ENCODE measurements at regions of chr3 and their contacts with region 1.

Region 1: GRCh38 chr3:185983495-185984141 is 45.8 kb upstream of the TRA2B start:
- DNase-seq: peak; percentile 61
- H3K4me3 ChIP-seq: no peak overlapping the region
- H3K27ac ChIP-seq: no peak overlapping the region
- H3K4me1 ChIP-seq: no peaks in the 10 kb centered on the region
- H3K27me3 ChIP-seq: no peaks in the 10 kb centered on the region
- CTCF ChIP-seq: peak; percentile 90 to 95

Region 2: DNA sequence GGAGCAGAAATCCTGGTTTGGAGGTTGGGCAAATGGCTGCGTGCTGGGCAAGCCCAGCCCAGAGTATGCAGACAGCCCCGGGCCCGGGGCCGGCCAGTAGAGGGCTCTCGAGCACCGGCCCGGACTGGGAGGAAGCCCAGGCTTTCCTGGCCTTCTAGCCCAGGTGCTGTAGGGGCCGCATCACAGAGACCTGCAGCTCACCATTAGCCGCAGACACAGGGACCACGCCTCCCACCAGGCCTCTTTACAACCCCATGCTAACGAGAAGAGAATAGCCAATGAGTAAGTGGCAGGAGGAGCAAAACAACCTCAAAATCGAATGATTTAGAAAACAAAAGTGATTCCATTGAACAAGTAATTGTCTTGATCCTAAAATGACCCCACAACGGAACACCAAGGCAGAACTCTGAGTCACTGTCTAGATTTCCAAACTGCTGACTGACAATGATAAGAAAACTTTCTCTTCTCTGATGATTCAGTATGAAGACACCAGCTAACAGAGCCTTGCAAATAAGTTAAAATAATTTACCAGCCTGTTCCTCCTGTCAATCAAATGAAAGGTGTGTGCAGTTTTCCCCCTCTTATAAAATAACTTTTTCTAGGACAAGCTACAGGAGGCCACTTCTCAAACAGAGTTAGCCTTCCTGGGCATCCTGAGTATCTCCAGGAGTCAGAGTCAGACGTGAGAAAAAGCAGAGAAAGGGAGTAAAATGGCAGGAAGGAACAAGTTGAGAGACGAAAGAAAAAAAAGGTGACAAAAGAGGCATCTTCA is 276.2 kb after region 1 on chr3:
- CTCF ChIA-PET with region 1: no interaction called
- dilution Hi-C with region 1: no loop called
- in situ Hi-C with region 1: loop called in 1 of 2 experiments (anchors 5 kb)
- intact Hi-C with region 1: loop called (anchors 5 kb)
- DNase-seq: peak; percentile 84
- H3K4me3 ChIP-seq: peak overlapping the region in 2 of 3 experiments; percentile 2 to 27
- H3K27ac ChIP-seq: no peak overlapping the region
- H3K4me1 ChIP-seq: peaks cover 25% of the 10 kb centered on the region
- H3K27me3 ChIP-seq: no peaks in the 10 kb centered on the region
- CTCF ChIP-seq: peak; percentile 67 to 96

Region 3: GRCh38 chr3:186320862-186321568 is 337.4 kb after region 1 on chr3:
- CTCF ChIA-PET with region 1: interaction called, 10 read pairs
- dilution Hi-C with region 1: no loop called
- in situ Hi-C with region 1: no loop called
- intact Hi-C with region 1: no loop called
- DNase-seq: peak; percentile 93
- H3K4me3 ChIP-seq: no peak overlapping the region
- H3K27ac ChIP-seq: peak overlapping the region; percentile 76
- H3K4me1 ChIP-seq: peaks cover 26% of the 10 kb centered on the region
- H3K27me3 ChIP-seq: no peaks in the 10 kb centered on the region
- CTCF ChIP-seq: no peak

Region 4: DNA sequence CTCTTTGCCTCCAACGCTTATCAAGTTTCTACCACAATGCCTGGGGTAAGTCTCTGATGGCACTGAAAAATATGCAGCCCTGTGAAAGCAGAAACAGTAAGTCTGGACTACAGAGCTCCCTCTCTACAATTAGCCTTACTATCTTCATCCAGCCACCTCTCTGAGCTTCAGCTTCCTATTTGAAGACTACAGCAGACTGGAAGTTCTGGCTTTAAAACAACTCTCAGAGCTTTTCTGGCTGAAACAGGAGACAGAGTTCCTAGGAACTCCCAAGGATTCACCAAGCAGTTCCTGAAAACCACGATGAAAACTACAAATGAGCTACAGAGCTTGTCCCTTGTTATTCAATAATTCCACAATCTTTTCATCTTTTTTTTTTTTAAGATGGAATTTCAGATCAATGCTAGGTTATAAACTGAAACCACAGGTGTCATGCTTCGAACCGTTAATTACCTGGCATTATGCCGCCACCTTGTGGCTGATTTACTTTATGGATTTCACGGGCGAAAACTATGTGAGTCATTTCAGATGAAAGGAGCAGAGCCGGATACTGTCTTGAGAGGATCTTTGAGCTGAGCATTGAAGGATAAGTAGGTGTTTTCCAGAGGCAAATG is 556.7 kb after region 1 on chr3:
- CTCF ChIA-PET with region 1: no interaction called
- dilution Hi-C with region 1: no loop called
- in situ Hi-C with region 1: loop called (anchors 5 to 10 kb)
- intact Hi-C with region 1: loop called (anchors 1 kb)
- DNase-seq: peak; percentile 78
- H3K4me3 ChIP-seq: no peak overlapping the region
- H3K27ac ChIP-seq: peak overlapping the region; percentile 4
- H3K4me1 ChIP-seq: peaks cover 17% of the 10 kb centered on the region
- H3K27me3 ChIP-seq: no peaks in the 10 kb centered on the region
- CTCF ChIP-seq: peak; percentile 64 to 66

Region 5: DNA sequence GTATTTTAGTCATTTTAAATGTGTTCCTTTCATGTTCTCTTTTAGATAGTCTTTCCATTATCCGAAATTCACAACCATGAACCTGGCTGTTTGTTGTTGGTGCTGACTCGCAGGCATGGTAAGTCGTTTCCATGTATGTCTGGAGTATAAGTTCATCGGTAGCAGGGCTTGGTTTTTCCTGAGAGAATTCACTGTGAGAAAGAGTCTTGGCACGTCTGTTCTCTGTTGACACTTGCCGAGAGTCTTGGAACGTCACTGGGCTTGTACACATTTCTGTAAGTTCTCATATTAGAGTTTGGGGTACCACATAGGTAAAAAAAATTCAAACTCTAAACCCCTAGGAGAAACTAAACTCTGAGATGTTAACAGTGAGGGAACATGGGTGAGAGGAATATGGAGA is 770.4 kb after region 1 on chr3:
- CTCF ChIA-PET with region 1: no interaction called
- dilution Hi-C with region 1: no loop called
- in situ Hi-C with region 1: no loop called
- intact Hi-C with region 1: loop called (anchors 5 kb)
- DNase-seq: no peak
- H3K4me3 ChIP-seq: no peak overlapping the region
- H3K27ac ChIP-seq: peak overlapping the region; percentile 83
- H3K4me1 ChIP-seq: peaks cover 15% of the 10 kb centered on the region
- H3K27me3 ChIP-seq: no peaks in the 10 kb centered on the region
- CTCF ChIP-seq: no peak

Measured in mammary epithelial cell (primary cell).